ENCODE measurements at regions of chr11 and their contacts with region 1.

Region 1: DNA sequence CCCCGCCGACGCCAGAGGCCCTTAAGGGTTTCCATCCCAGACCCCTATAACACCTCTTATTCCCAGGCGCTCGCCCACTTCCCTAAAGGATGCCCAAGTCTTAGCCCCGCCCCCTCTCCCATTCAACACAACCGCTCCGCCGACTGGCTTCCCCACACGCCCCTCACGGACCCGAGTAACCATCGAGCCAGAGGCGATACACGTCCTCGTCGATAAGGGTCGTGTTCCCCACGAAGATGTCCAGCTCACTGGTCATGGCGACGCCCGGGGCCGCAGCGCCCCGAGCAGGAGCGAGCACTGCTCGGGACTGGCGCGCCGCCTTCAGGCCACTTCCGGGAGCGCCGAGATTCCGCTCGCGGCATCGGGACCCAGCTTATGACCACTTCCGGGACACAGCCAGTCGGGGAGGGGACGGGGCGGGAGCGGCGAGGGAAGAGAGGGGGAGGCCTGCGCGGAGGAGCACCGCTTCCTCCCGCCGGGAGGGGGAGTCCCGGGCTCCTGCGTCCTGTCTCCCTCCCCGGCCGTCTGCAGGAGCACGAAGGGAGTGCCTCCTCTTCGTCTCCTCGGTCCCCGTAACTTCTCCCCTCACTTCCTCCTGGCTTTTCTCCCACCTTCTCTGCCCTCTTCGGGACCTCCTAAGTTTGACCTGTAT is at the start of gene FIBP:
- DNase-seq: peak; percentile 98
- ATAC-seq: peak; percentile 14
- H3K4me3 ChIP-seq: peak within 1 kb of the TSS; percentile 72
- H3K27ac ChIP-seq: peak within 1 kb of the TSS; percentile 56
- H3K4me1 ChIP-seq: peaks cover 31% of the 10 kb centered on the region
- H3K27me3 ChIP-seq: no peaks in the 10 kb centered on the region
- CTCF ChIP-seq: peak; percentile 87
- total RNA-seq, gene FIBP: 221 TPM in 2 replicates

Region 2: DNA sequence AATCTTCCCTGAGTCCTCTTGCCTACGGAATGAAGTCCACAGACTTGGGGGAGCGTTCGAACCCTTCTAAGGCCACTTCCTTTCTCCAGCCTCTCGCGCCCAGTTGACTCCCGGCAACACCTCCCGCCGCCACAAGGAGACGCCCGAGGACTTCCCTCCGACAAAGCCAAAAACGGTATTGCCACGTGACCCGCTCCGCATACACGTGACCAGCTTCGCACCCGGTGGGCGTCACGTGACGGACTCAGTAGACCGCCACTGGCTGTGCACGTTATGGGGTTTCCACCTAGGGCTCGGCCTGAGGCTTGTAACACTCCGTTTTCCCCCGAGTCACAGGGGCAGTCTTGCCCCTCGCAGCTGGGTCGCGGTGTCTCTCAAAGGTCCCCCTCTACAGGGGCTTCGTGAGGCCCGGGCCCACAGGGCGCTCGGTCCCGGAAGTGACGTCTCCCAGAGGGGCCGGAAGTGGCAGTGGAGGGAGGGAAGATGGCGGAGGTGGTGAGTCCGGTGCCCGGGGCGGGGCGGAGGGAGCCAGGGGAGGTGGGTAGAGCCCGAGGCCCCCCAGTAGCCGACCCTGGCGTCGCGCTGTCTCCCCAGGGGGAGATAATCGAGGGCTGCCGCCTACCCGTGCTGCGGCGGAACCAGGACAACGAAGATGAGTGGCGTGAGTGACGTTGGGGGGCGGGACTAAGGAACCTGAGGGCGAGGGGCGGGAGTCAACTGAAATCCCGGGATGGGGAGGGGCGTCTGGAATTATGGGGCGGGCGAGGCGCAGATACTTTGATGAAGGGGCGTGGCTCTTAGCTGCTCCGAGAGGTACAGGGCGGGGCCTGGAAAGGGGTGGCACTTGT is 176.3 kb before region 1 on chr11 and contains the start of gene KAT5:
- CTCF ChIA-PET with region 1: interaction called, 4 read pairs
- POLR2A ChIA-PET with region 1: interaction called, 42 read pairs
- intact Hi-C with region 1: no loop called
- DNase-seq: peak; percentile 99
- ATAC-seq: peak; percentile 89
- H3K4me3 ChIP-seq: peak within 1 kb of the TSS; percentile 70
- H3K27ac ChIP-seq: peak within 1 kb of the TSS; percentile 91
- H3K4me1 ChIP-seq: peaks cover 11% of the 10 kb centered on the region
- H3K27me3 ChIP-seq: no peaks in the 10 kb centered on the region
- CTCF ChIP-seq: peak; percentile 95
- total RNA-seq, gene KAT5: 74.9 and 83.9 TPM in 2 replicates

Region 3: DNA sequence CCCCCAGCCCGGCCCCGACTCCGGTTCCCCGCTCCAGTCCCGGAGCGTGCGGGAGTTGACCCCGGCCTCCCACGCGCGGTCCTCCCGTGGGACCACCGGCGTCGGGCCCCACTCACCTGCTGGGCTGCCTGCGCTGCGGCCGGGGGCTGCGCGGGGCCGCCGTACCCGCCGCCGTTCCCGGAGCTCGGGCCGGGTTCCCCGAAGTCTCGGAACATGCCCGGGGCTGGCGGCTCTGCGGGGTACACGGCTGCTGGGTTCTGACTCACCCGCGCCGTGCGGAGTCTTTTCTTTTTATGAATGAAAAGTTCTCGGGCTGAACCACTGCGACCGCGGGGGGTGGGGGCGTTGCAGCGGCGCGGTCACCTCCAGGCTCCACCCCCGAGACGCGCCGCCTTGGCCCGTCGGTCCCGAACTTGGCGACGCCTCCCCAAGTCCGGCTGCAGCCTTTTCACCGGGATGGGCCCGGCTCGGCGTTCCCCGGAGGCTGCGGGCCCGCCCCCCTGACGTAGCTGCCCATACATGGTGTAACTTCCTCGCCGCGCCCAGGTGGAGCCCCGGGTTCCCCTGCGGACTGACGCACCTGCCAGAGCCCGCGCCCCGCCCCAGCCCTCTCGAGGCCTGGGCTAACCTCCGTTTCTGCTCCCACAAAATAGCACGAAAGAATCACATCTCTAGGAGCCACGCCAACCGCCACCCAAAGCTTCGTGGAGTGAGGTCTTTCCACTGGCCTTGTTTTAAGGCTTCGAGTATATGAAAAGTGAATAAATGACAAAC is 12.0 kb after region 1 on chr11 and contains the start of gene FOSL1:
- CTCF ChIA-PET with region 1: interaction called, 24 read pairs
- POLR2A ChIA-PET with region 1: interaction called, 32 read pairs
- intact Hi-C with region 1: no loop called
- DNase-seq: peak; percentile 99
- ATAC-seq: peak; percentile 66
- H3K4me3 ChIP-seq: peak within 1 kb of the TSS; percentile 78
- H3K27ac ChIP-seq: peak within 1 kb of the TSS; percentile 96
- H3K4me1 ChIP-seq: peaks cover 55% of the 10 kb centered on the region
- H3K27me3 ChIP-seq: no peaks in the 10 kb centered on the region
- CTCF ChIP-seq: no peak
- total RNA-seq, gene FOSL1: 656 and 851 TPM in 2 replicates

Region 4: GRCh38 chr11:65919146-65920033 is 31.1 kb after region 1 on chr11 and contains the start of gene DRAP1:
- CTCF ChIA-PET with region 1: interaction called, 16 read pairs
- POLR2A ChIA-PET with region 1: interaction called, 35 read pairs
- intact Hi-C with region 1: no loop called
- DNase-seq: peak; percentile 98
- ATAC-seq: peak; percentile 53
- H3K4me3 ChIP-seq: peak within 1 kb of the TSS; percentile 82
- H3K27ac ChIP-seq: peak within 1 kb of the TSS; percentile 93
- H3K4me1 ChIP-seq: peaks cover 46% of the 10 kb centered on the region
- H3K27me3 ChIP-seq: no peaks in the 10 kb centered on the region
- CTCF ChIP-seq: no peak
- total RNA-seq, gene DRAP1: 944 and 1,531 TPM in 2 replicates

Region 5: GRCh38 chr11:65988791-65989592 is 100.7 kb after region 1 on chr11:
- CTCF ChIA-PET with region 1: interaction called, 9 read pairs
- POLR2A ChIA-PET with region 1: interaction called, 10 read pairs
- intact Hi-C with region 1: loop called (anchors 1 kb)
- DNase-seq: peak; percentile 98
- ATAC-seq: peak; percentile 97
- H3K4me3 ChIP-seq: no peak overlapping the region
- H3K27ac ChIP-seq: no peak overlapping the region
- H3K4me1 ChIP-seq: no peaks in the 10 kb centered on the region
- H3K27me3 ChIP-seq: no peaks in the 10 kb centered on the region
- CTCF ChIP-seq: peak; percentile 99